ENCODE measurements at regions of chr1 and their contacts with region 1.

Region 1: GRCh38 chr1:10209905-10210810 is at the start of gene KIF1B:
- DNase-seq: peak; percentile 84
- H3K4me3 ChIP-seq: peak within 1 kb of the TSS; percentile 89 to 96 (median 90)
- H3K27ac ChIP-seq: peak within 1 kb of the TSS; percentile 94 to 100 (median 100)
- H3K4me1 ChIP-seq: peaks cover 5 to 45% (median 17%) of the 10 kb centered on the region in 3 donors
- H3K27me3 ChIP-seq: no peaks in the 10 kb centered on the region
- CTCF ChIP-seq: peak; percentile 95 to 99 (median 98)
- POLR2A ChIP-seq: peak in 3 of 4 donors; percentile 96 to 99 (median 98)
- total RNA-seq, gene KIF1B: 27.1 to 40.6 (median 38.1) TPM

Region 2: GRCh38 chr1:9914610-9914937 is 295.6 kb before region 1 on chr1:
- intact Hi-C with region 1: no loop called
- DNase-seq: no peak
- H3K4me3 ChIP-seq: no peak overlapping the region
- H3K27ac ChIP-seq: no peak overlapping the region
- H3K4me1 ChIP-seq: peaks cover 6 to 36% (median 13%) of the 10 kb centered on the region in 3 donors
- H3K27me3 ChIP-seq: no peaks in the 10 kb centered on the region
- CTCF ChIP-seq: peak in 1 of 6 experiments; percentile 8
- POLR2A ChIP-seq: no peak

Region 3: GRCh38 chr1:10338047-10338446 is 127.9 kb after region 1 on chr1:
- intact Hi-C with region 1: loop called (anchors 10 kb)
- DNase-seq: no peak
- H3K4me3 ChIP-seq: no peak overlapping the region
- H3K27ac ChIP-seq: no peak overlapping the region
- H3K4me1 ChIP-seq: peaks cover 0 to 32% (median 0%) of the 10 kb centered on the region in 3 donors
- H3K27me3 ChIP-seq: no peaks in the 10 kb centered on the region
- CTCF ChIP-seq: peak in 4 of 6 experiments; percentile 36 to 46 (median 42)
- POLR2A ChIP-seq: no peak